ENCODE measurements at regions of chr7 and their contacts with region 1.

Region 1: GRCh38 chr7:47453093-47454049 is 128.5 kb downstream of the TNS3 start:
- DNase-seq: peak; percentile 67
- ATAC-seq: peak; percentile 50
- H3K4me3 ChIP-seq: no peak overlapping the region
- H3K27ac ChIP-seq: peak overlapping the region; percentile 84
- H3K4me1 ChIP-seq: peaks cover 89% of the 10 kb centered on the region
- H3K27me3 ChIP-seq: no peaks in the 10 kb centered on the region
- CTCF ChIP-seq: no peak

Region 2: DNA sequence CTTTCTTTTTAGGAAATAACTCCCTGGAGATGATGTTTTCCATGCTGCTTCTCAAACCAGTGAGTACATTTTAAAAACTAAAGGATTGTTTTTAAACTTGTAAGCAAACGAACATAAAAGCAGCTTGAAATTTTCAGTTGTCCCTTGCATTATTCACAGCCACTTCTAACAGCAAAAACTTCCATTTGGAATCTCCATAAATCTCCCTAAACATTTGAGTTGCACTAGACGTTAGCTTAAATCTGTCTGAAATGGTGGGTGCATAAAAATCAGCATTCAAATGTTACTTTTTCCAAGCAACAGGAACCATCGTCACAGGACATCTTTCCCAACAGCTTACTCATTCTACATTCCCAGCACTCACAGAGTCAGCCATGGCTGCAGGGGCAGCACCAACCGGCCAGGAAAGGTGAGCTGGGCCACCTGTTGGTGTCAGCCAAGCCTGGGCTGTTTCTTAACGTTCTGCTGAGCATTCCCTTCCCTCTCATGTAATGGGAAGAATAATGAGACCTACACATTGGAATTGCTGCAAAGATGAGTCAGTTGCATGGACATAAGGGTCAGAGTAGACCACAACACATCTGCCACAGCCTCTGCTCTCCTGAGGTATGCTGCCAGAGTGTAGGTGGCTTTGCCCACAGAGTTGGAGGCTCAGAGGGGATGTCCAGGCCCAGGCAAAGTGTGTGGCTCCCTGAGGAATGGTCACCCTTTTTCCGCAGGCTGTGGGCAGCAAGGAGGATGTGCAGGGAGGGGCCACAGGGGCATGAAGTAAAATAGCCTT is 34.6 kb before region 1 on chr7:
- CTCF ChIA-PET with region 1: no interaction called
- POLR2A ChIA-PET with region 1: interaction called, 25 read pairs
- in situ Hi-C with region 1: no loop called
- intact Hi-C with region 1: no loop called
- DNase-seq: no peak
- ATAC-seq: no peak
- H3K4me3 ChIP-seq: no peak overlapping the region
- H3K27ac ChIP-seq: no peak overlapping the region; the same call in 1 of the 2 replicates
- H3K4me1 ChIP-seq: peaks cover 14% of the 10 kb centered on the region
- H3K27me3 ChIP-seq: no peaks in the 10 kb centered on the region
- CTCF ChIP-seq: no peak

Region 3: DNA sequence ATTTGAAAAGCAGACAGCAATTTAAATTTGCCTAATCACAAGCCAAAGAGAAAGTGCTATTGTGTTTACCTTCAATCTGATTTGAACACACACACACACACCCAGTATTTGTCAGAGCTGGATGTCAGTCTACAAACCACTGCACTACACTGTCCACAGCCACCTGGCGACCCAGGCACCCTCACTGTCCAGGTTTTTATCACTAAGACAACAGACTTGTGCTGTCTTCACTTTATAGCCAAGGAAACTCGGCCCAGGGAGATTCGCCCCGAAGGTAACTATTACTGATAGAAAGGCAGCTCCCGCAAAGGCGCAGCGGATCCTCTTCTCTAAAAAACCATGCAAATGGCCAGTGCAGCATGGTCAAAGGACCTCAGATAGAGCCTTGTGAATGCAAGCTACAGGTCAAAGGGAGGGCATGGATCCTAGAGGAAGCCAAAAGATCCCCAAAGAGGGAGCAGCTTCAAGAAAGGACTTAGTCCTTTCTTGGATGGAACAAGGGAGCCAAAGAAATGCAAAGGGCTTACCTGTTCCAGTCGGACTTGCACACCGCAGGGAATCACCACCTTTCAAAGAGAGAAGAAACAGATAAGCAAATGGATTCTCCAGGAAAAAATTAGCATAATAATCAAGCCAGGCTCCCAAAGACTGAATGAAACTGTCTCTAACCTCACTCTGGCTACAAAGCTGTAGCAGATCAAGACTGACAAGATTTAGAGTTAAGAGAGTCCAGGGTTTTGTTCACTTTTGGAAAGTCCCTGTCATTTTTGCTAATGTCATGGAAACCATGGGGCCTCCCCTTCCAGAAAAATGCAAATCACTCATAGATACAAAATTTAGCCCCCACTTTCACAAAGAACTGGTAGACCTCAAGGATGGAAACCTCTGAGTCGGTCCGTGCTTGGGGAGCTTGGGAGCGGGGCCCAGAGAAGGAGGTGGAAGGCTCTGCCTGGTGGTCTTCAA is 27.5 kb after region 1 on chr7:
- CTCF ChIA-PET with region 1: interaction called, 14 read pairs
- POLR2A ChIA-PET with region 1: no interaction called
- in situ Hi-C with region 1: no loop called
- intact Hi-C with region 1: no loop called
- DNase-seq: no peak
- ATAC-seq: no peak
- H3K4me3 ChIP-seq: no peak overlapping the region
- H3K27ac ChIP-seq: peak overlapping the region; percentile 80
- H3K4me1 ChIP-seq: peaks cover 88% of the 10 kb centered on the region
- H3K27me3 ChIP-seq: no peaks in the 10 kb centered on the region
- CTCF ChIP-seq: no peak